ENCODE measurements at regions of chr1 and their contacts with region 1.

Region 1: GRCh38 chr1:201756406-201756805 is 72.6 kb upstream of the IPO9 start:
- DNase-seq: no peak
- H3K4me3 ChIP-seq: no peak overlapping the region
- H3K27ac ChIP-seq: no peak overlapping the region
- H3K4me1 ChIP-seq: no peaks in the 10 kb centered on the region
- H3K27me3 ChIP-seq: no peaks in the 10 kb centered on the region
- CTCF ChIP-seq: no peak
- POLR2A ChIP-seq: no peak

Region 2: GRCh38 chr1:201108614-201109013 is 647.8 kb before region 1 on chr1:
- intact Hi-C with region 1: no loop called
- DNase-seq: no peak
- H3K4me3 ChIP-seq: no peak overlapping the region
- H3K27ac ChIP-seq: no peak overlapping the region
- H3K4me1 ChIP-seq: no peaks in the 10 kb centered on the region
- H3K27me3 ChIP-seq: peaks cover 0 to 5% of the 10 kb centered on the region in 2 donors
- CTCF ChIP-seq: no peak
- POLR2A ChIP-seq: no peak

Region 3: GRCh38 chr1:201686714-201687455 is 69.5 kb before region 1 on chr1:
- intact Hi-C with region 1: no loop called
- DNase-seq: no peak
- H3K4me3 ChIP-seq: no peak overlapping the region
- H3K27ac ChIP-seq: no peak overlapping the region
- H3K4me1 ChIP-seq: no peaks in the 10 kb centered on the region
- H3K27me3 ChIP-seq: no peaks in the 10 kb centered on the region
- CTCF ChIP-seq: no peak
- POLR2A ChIP-seq: no peak

Region 4: DNA sequence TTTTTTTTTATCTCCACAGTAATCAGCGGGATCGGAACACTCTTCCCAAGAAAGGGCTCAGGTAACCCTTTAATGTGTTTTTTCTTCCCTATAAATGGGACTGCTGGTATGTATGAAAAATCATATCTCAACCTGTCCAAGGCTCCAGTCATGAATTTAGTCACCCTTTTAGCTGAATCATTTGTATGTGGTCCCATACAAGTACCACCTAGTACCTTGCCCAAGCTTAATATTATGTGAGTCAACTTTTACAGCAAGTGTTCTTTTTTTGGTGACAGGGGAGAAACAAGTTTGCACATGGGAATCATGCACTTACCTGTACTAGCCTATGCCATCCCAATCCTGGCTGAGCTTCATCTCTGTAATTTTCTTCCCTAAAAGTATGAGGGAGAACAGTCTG is 28.9 kb after region 1 on chr1:
- intact Hi-C with region 1: loop called (anchors 1 kb)
- DNase-seq: no peak
- H3K4me3 ChIP-seq: no peak overlapping the region
- H3K27ac ChIP-seq: no peak overlapping the region
- H3K4me1 ChIP-seq: no peaks in the 10 kb centered on the region
- H3K27me3 ChIP-seq: no peaks in the 10 kb centered on the region
- CTCF ChIP-seq: no peak
- POLR2A ChIP-seq: no peak

Region 5: DNA sequence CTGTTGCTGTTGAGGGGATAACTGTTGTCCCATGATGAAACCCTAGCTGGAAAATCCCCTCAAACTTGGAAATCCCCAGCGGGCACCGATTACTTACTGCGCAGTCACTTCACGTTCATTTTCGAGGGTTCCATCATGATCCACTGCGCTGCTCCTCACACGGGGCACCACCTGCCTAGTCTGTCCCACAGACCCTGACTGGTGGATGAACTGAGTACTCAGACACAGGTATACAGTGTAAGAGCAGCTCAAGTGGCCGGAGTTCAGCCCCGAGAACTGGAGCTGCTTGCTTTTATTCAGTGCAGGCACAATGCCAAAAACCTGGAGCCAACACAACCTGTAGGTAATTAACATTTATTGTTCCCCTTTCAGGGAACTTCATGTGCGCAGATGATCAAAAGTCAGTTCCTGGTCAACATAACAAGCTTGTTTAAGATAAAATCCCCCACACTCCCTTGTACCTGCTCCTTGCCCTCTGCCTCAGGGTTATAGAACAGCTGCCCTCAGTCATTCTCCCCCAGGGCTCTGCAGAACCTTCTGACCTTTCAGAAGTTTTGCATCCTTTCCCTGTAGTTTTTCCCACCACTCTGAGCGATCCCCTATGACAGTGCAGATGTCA is 1672.7 kb after region 1 on chr1:
- intact Hi-C with region 1: loop called (anchors 10 kb)
- DNase-seq: no peak
- H3K4me3 ChIP-seq: peak overlapping the region in 1 of 3 donors; percentile 32
- H3K27ac ChIP-seq: peak overlapping the region in 1 of 2 donors; percentile 26
- H3K4me1 ChIP-seq: peaks cover 0 to 11% of the 10 kb centered on the region in 2 donors
- H3K27me3 ChIP-seq: no peaks in the 10 kb centered on the region
- CTCF ChIP-seq: no peak
- POLR2A ChIP-seq: no peak

Measured in breast epithelium (tissue), 4 donors.